Caco-2 (cell line): ENCODE measurements at regions of chr11 and their contacts with region 1.

Region 1: DNA sequence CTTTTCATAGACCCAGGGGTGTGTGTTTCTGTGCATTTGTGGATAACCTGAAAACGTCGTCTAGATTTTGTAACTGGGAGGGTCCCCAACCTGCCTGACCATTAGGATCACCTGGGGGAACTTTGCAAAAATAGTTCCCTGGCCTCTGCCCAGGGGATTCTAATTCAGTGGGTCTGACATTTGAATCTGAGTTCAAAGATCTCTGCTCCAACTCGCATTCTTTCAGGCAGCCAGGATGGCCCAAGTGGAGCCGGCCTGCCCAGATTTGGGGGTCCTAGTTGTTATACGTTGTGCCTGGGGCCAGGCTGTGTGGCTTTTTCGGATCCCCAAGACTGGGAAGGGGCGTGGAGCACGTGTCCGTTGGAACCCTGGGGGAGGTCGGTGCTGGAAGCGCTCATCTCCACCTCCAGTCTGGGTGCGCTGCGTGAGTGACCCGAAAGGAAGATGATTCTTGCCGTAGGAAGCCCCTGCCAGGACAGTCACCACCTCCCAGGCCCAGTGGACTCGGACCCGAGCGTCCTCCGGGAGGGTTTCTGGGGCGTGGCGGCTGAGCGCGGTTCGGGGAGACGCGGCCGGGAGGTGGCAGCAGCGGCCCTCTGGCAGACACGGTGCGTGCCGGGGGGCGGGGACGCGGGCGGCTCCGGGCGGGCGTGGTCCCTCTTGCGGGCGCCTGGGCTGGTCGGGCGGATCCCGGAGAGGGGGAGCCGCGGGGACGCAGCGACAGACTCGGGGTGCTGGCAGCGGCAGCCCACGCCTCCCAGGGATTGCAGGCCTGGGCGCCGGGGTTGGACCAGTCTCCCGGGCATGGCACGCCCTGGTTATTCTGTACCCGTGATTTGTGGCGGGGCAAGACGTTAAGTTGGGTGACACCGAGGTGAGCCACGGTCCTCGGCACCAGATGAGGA is 29.2 kb upstream of the PLET1 start:
- DNase-seq: peak; percentile 79 to 94
- H3K4me3 ChIP-seq: peak overlapping the region; percentile 47
- H3K4me3 Mint-ChIP-seq: peak overlapping the region; percentile 68
- H3K27ac Mint-ChIP-seq: no peak overlapping the region
- H3K4me1 ChIP-seq: 0 out of 2 replicates have a peak, but pooled peaks cover 3% of the 10 kb centered on the region
- H3K4me1 Mint-ChIP-seq: no peaks in the 10 kb centered on the region
- H3K27me3 ChIP-seq: peaks cover 1% of the 10 kb centered on the region; the same call in 1 of the 2 replicates
- H3K27me3 Mint-ChIP-seq: peaks cover 25% of the 10 kb centered on the region
- CTCF ChIP-seq: peak; percentile 88 to 95

Region 2: DNA sequence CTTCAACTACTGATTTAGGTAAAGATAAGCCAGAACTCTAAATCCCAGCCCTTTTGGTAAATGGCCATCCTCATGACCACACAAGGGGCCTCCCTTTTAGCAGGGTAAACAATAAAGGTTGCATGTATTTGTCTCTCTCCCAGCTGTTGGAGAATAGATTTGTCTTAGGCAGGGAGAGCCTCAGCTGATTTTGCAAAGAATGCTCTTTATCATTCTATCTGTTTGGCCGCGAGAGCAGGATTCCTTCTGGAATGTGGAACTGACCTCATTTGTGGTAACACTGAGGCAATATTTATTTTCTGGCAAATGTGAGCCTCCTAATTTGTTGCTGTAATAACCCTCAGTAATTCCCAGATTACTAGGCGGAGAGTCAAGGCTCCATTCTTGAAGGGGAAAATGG is 48.4 kb before region 1 on chr11:
- CTCF ChIA-PET with region 1: no interaction called
- POLR2A ChIA-PET with region 1: no interaction called
- intact Hi-C with region 1: no loop called
- DNase-seq: peak; percentile 66 to 80
- H3K4me3 ChIP-seq: no peak overlapping the region
- H3K4me3 Mint-ChIP-seq: no peak overlapping the region
- H3K27ac Mint-ChIP-seq: no peak overlapping the region
- H3K4me1 ChIP-seq: peaks cover 12% of the 10 kb centered on the region
- H3K4me1 Mint-ChIP-seq: peaks cover 29% of the 10 kb centered on the region
- H3K27me3 ChIP-seq: no peaks in the 10 kb centered on the region
- H3K27me3 Mint-ChIP-seq: no peaks in the 10 kb centered on the region
- CTCF ChIP-seq: no peak

Region 3: DNA sequence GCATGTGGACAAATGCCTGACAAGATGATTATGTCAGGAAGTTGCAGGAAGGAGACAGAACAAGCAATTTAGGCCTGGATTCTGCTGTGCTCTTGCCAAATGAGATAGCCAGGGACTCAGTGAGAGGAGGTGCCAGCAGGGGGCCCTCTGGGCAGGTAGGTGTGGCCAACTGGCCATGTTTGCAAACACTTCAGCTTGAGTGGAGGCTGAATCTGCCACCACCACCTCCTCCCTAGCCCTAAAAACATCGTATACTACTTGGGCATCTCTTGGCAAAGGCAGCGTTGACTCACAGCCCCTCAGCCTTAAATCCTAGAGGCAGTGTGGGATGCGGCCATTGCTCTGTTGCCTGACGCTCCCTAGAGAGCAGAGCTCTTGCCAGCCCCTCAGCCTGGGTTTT is 65.9 kb after region 1 on chr11:
- CTCF ChIA-PET with region 1: no interaction called
- POLR2A ChIA-PET with region 1: no interaction called
- intact Hi-C with region 1: no loop called
- DNase-seq: peak; percentile 53 to 56
- H3K4me3 ChIP-seq: no peak overlapping the region
- H3K4me3 Mint-ChIP-seq: no peak overlapping the region
- H3K27ac Mint-ChIP-seq: no peak overlapping the region
- H3K4me1 ChIP-seq: no peaks in the 10 kb centered on the region
- H3K4me1 Mint-ChIP-seq: no peaks in the 10 kb centered on the region
- H3K27me3 ChIP-seq: no peaks in the 10 kb centered on the region
- H3K27me3 Mint-ChIP-seq: peaks cover 7% of the 10 kb centered on the region
- CTCF ChIP-seq: peak; percentile 38 to 43

Region 4: DNA sequence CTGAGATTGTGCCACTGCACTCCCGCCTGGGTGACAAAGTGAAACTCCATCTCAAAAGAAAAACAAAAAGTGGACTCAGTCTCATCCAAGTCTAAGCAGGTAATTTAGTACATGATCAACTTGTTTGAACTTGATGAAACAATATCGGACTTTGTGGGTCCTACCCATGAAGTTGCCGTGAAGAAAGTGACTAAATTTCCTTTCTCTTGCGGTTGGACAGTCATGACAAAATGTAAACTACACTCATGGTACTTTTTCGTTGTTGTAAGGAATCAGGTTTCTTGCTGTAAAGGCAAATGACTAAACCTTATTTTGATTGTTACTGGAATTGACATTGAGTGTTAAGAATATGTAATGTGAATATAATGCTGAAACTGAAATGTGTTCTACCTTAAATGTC is 135.3 kb after region 1 on chr11:
- CTCF ChIA-PET with region 1: no interaction called
- POLR2A ChIA-PET with region 1: no interaction called
- intact Hi-C with region 1: no loop called
- DNase-seq: no peak
- H3K4me3 ChIP-seq: no peak overlapping the region
- H3K4me3 Mint-ChIP-seq: no peak overlapping the region
- H3K27ac Mint-ChIP-seq: no peak overlapping the region
- H3K4me1 ChIP-seq: no peaks in the 10 kb centered on the region
- H3K4me1 Mint-ChIP-seq: no peaks in the 10 kb centered on the region
- H3K27me3 ChIP-seq: no peaks in the 10 kb centered on the region; the same call in none of the 2 replicates
- H3K27me3 Mint-ChIP-seq: peaks cover 5% of the 10 kb centered on the region
- CTCF ChIP-seq: no peak

Region 5: GRCh38 chr11:112453601-112454577 is 164.0 kb after region 1 on chr11:
- CTCF ChIA-PET with region 1: interaction called, 5 read pairs
- POLR2A ChIA-PET with region 1: no interaction called
- intact Hi-C with region 1: loop called (anchors 1 kb)
- DNase-seq: peak; percentile 49 to 67
- H3K4me3 ChIP-seq: no peak overlapping the region
- H3K4me3 Mint-ChIP-seq: no peak overlapping the region
- H3K27ac Mint-ChIP-seq: no peak overlapping the region
- H3K4me1 ChIP-seq: no peaks in the 10 kb centered on the region
- H3K4me1 Mint-ChIP-seq: peaks cover 5% of the 10 kb centered on the region
- H3K27me3 ChIP-seq: no peaks in the 10 kb centered on the region
- H3K27me3 Mint-ChIP-seq: peaks cover 22% of the 10 kb centered on the region
- CTCF ChIP-seq: peak; percentile 52 to 67